PC-3 (cell line): ENCODE measurements at regions of chr20 and their contacts with region 1.

Region 1: GRCh38 chr20:43942661-43943290 is 28.1 kb downstream of the TOX2 start:
- DNase-seq: peak; percentile 72
- ATAC-seq: no peak; the same call in none of the 2 replicates
- H3K4me3 ChIP-seq: peak overlapping the region; percentile 40
- H3K27ac ChIP-seq: peak overlapping the region; percentile 60
- H3K4me1 ChIP-seq: peaks cover 57% of the 10 kb centered on the region
- H3K27me3 ChIP-seq: no peaks in the 10 kb centered on the region
- CTCF ChIP-seq: no peak

Region 2: DNA sequence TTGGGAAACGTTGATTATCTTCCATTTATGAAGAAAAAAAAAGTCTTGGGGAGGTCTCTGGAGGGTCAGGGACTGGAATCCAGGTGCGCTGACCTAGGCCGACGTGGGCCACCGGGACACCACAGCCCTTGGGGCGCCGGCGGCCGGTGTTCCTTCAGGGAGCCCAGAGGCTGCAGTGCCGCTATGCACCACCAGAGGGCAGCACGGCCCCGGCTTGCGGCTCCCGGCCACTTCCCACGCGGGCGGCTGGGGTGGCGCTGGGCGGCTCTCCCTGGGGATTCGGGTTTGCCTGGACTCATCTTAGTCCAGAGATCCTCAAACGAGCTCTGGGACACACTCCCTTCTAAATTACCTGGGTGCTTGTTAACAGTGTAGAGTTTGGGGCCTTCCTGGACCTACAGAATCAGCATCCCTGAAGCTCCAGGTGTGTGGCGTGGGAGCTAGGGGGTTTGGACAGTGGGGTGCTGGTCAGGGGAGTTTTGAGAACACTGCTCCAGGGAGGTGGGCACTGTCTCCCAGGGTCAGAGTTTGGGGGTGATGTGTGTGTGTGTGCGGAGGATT is 193.0 kb before region 1 on chr20:
- CTCF ChIA-PET with region 1: no interaction called
- POLR2A ChIA-PET with region 1: no interaction called
- intact Hi-C with region 1: loop called (anchors 10 kb)
- DNase-seq: peak; percentile 88
- ATAC-seq: peak; percentile 71
- H3K4me3 ChIP-seq: no peak overlapping the region
- H3K27ac ChIP-seq: no peak overlapping the region
- H3K4me1 ChIP-seq: peaks cover 32% of the 10 kb centered on the region
- H3K27me3 ChIP-seq: no peaks in the 10 kb centered on the region
- CTCF ChIP-seq: peak; percentile 99

Region 3: GRCh38 chr20:43955062-43955749 is 12.4 kb after region 1 on chr20:
- CTCF ChIA-PET with region 1: no interaction called
- POLR2A ChIA-PET with region 1: no interaction called
- intact Hi-C with region 1: loop called (anchors 1 kb)
- DNase-seq: peak; percentile 96
- ATAC-seq: peak; percentile 92
- H3K4me3 ChIP-seq: no peak overlapping the region; the same call in 1 of the 2 replicates
- H3K27ac ChIP-seq: peak overlapping the region; percentile 72
- H3K4me1 ChIP-seq: peaks cover 33% of the 10 kb centered on the region
- H3K27me3 ChIP-seq: no peaks in the 10 kb centered on the region
- CTCF ChIP-seq: no peak

Region 4: GRCh38 chr20:43975096-43975768 is 32.5 kb after region 1 on chr20:
- CTCF ChIA-PET with region 1: no interaction called
- POLR2A ChIA-PET with region 1: no interaction called
- intact Hi-C with region 1: loop called (anchors 2 kb)
- DNase-seq: peak; percentile 94
- ATAC-seq: peak; percentile 94
- H3K4me3 ChIP-seq: no peak overlapping the region
- H3K27ac ChIP-seq: peak overlapping the region; percentile 72
- H3K4me1 ChIP-seq: peaks cover 16% of the 10 kb centered on the region
- H3K27me3 ChIP-seq: no peaks in the 10 kb centered on the region
- CTCF ChIP-seq: no peak

Region 5: DNA sequence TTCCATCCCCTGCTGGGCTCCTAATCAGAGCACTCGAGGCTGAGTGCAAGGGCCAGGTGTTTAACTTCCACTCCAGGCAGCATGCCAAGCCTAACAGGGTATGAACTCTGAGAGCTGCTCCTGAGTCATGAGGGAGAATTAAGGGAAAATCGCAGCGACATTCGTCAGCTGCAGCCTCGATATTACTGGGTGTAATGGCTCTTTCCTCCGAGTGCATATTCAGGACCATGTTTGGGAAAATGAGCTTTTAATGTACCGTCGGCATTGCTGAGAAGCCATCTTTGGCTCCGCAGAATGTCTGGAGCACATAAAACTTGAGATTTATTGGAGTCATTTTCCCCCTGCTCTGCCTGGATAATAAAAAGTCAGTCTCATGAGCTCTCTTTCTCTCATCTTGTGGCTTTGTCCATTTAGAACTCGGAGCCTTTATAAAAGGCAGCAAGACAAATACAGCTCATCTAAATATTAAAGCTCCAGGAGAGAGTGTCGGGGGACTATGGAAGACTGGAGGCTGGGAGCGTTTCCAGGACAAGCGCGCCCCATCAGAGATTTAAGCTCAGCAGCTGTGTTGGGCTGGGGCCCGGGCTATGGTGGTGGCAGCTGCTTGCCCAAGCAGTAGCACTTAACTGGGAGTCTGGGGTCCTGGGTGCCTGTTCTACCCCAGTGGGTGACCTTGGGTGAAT is 75.6 kb after region 1 on chr20:
- CTCF ChIA-PET with region 1: no interaction called
- POLR2A ChIA-PET with region 1: no interaction called
- intact Hi-C with region 1: loop called (anchors 2 kb)
- DNase-seq: peak; percentile 97
- ATAC-seq: peak; percentile 94
- H3K4me3 ChIP-seq: peak overlapping the region; percentile 42
- H3K27ac ChIP-seq: peak overlapping the region; percentile 32
- H3K4me1 ChIP-seq: peaks cover 24% of the 10 kb centered on the region
- H3K27me3 ChIP-seq: no peaks in the 10 kb centered on the region
- CTCF ChIP-seq: no peak